H1 (cell line): ENCODE measurements at regions of chr10 and their contacts with region 1.

Region 1: GRCh38 chr10:110304780-110305421 is at the start of gene SMNDC1:
- DNase-seq: peak; percentile 97 to 99
- H3K4me3 ChIP-seq: peak within 1 kb of the TSS; percentile 66 to 90 (median 78)
- H3K27ac ChIP-seq: peak within 1 kb of the TSS; percentile 81
- H3K4me1 ChIP-seq: 0 out of 7 replicates have a peak, but pooled peaks cover 0 to 3% (median 0%) of the 10 kb centered on the region in 4 experiments
- H3K27me3 ChIP-seq: no peaks in the 10 kb centered on the region
- CTCF ChIP-seq: no peak
- EP300 ChIP-seq: 0 out of 3 replicates have a peak, but pooled peaks of 1 of the 2 experiments have one; percentile 6
- POLR2A ChIP-seq: peak; percentile 79 to 89
- RAD21 ChIP-seq: no peak
- total RNA-seq, gene SMNDC1: 48.6 and 53.5 TPM in 2 replicates

Region 2: GRCh38 chr10:110083884-110084283 is 221.0 kb before region 1 on chr10:
- CTCF ChIA-PET with region 1: no interaction called
- POLR2A ChIA-PET with region 1: no interaction called
- DNase-seq: no peak
- H3K4me3 ChIP-seq: no peak overlapping the region
- H3K27ac ChIP-seq: no peak overlapping the region
- H3K4me1 ChIP-seq: peaks cover 0 to 7% (median 5%) of the 10 kb centered on the region in 4 experiments; a peak in 4 of 7 replicates
- H3K27me3 ChIP-seq: no peaks in the 10 kb centered on the region; a peak in 1 of 7 replicates
- CTCF ChIP-seq: no peak
- EP300 ChIP-seq: no peak
- POLR2A ChIP-seq: no peak
- RAD21 ChIP-seq: no peak

Region 3: DNA sequence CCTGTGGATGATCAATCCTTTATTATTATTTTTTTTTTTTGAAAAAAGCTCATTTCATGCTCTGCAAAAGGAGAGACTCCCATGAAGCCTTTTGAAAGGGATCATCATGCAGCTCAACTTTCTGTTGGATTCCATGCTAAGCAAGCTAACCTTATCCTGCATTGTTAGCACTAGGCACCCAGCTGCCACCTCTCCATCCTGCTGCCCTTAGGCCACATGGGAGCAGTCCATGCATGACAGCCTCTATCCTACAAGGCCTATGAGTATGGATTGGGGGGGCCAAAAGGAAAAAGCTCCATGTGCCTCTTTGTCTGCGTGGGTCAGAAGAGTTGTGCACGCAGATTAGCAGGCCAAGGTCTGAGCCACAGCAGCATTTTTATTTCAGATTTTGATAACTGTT is 19.4 kb before region 1 on chr10:
- CTCF ChIA-PET with region 1: interaction called, 3 read pairs
- POLR2A ChIA-PET with region 1: interaction called, 12 read pairs
- DNase-seq: no peak
- H3K4me3 ChIP-seq: no peak overlapping the region
- H3K27ac ChIP-seq: no peak overlapping the region
- H3K4me1 ChIP-seq: peaks cover 0 to 3% (median 2%) of the 10 kb centered on the region in 4 experiments; a peak in 3 of 7 replicates
- H3K27me3 ChIP-seq: no peaks in the 10 kb centered on the region
- CTCF ChIP-seq: no peak
- EP300 ChIP-seq: no peak
- POLR2A ChIP-seq: no peak
- RAD21 ChIP-seq: no peak

Region 4: DNA sequence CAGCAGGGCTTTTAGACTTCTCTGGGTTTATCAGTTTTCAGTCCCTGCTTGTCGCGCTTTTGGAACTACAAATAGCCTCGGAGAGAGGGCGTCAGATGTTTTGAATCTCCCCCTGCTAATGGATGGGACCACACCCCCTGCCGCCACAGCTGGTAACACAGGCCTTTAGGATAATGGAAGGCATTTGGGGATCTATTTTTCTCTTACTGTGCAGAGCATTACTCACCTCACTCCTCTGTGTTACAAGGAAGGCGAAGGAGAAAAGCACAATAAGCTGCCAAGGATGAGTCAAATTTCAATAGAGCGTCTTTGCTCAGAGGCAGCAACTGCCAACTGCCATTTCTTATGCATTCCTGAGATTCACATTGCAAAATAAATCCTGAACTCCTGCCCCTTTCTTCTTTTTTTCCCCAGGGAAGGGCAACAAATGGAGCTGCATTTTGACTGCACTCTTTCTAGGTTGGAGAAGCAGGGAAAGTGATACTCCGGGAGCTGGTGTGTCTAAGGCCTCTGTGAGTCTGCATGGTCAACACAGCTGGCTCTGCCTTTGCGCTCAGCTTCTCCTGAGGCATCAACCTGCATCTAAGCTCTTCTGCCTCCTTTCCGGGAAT is 31.3 kb after region 1 on chr10:
- CTCF ChIA-PET with region 1: interaction called, 12 read pairs
- POLR2A ChIA-PET with region 1: no interaction called
- DNase-seq: peak in 1 of 2 experiments; percentile 58
- H3K4me3 ChIP-seq: peak overlapping the region in 1 of 4 experiments; percentile 8; a peak in 1 of 8 replicates
- H3K27ac ChIP-seq: no peak overlapping the region
- H3K4me1 ChIP-seq: peaks cover 5 to 12% (median 6%) of the 10 kb centered on the region in 4 experiments; a peak in 6 of 7 replicates
- H3K27me3 ChIP-seq: no peaks in the 10 kb centered on the region
- CTCF ChIP-seq: peak in 2 of 3 experiments; percentile 12 to 17; a peak in 2 of 4 replicates
- EP300 ChIP-seq: no peak
- POLR2A ChIP-seq: no peak
- RAD21 ChIP-seq: no peak

Region 5: GRCh38 chr10:110497438-110498086 is 192.7 kb after region 1 on chr10 and contains the start of gene DUSP5:
- CTCF ChIA-PET with region 1: interaction called, 11 read pairs
- POLR2A ChIA-PET with region 1: interaction called, 11 read pairs
- DNase-seq: peak; percentile 56 to 94
- H3K4me3 ChIP-seq: peak within 1 kb of the TSS; percentile 65 to 96 (median 80)
- H3K27ac ChIP-seq: peak within 1 kb of the TSS; percentile 62; the same call in 1 of the 2 replicates
- H3K4me1 ChIP-seq: peaks cover 12 to 33% (median 23%) of the 10 kb centered on the region in 4 experiments
- H3K27me3 ChIP-seq: peaks cover 0 to 34% (median 17%) of the 10 kb centered on the region in 4 experiments; a peak in 5 of 7 replicates
- CTCF ChIP-seq: no peak
- EP300 ChIP-seq: no peak
- POLR2A ChIP-seq: peak; percentile 84 to 94
- RAD21 ChIP-seq: no peak
- total RNA-seq, gene DUSP5: 27.0 and 30.3 TPM in 2 replicates

Region 6: GRCh38 chr10:110530131-110530831 is 225.4 kb after region 1 on chr10:
- CTCF ChIA-PET with region 1: interaction called, 11 read pairs
- POLR2A ChIA-PET with region 1: interaction called, 11 read pairs
- DNase-seq: peak; percentile 54 to 86
- H3K4me3 ChIP-seq: peak overlapping the region; percentile 27 to 65 (median 42); a peak in 7 of 8 replicates
- H3K27ac ChIP-seq: peak overlapping the region; percentile 57; the same call in 1 of the 2 replicates
- H3K4me1 ChIP-seq: peaks cover 4 to 17% (median 5%) of the 10 kb centered on the region in 4 experiments
- H3K27me3 ChIP-seq: no peaks in the 10 kb centered on the region; a peak in 1 of 7 replicates
- CTCF ChIP-seq: no peak
- EP300 ChIP-seq: no peak
- POLR2A ChIP-seq: peak in 1 of 2 experiments; percentile 30; a peak in 1 of 3 replicates
- RAD21 ChIP-seq: 0 out of 4 replicates have a peak, but pooled peaks of 1 of the 2 experiments have one; percentile 0

Region 7: DNA sequence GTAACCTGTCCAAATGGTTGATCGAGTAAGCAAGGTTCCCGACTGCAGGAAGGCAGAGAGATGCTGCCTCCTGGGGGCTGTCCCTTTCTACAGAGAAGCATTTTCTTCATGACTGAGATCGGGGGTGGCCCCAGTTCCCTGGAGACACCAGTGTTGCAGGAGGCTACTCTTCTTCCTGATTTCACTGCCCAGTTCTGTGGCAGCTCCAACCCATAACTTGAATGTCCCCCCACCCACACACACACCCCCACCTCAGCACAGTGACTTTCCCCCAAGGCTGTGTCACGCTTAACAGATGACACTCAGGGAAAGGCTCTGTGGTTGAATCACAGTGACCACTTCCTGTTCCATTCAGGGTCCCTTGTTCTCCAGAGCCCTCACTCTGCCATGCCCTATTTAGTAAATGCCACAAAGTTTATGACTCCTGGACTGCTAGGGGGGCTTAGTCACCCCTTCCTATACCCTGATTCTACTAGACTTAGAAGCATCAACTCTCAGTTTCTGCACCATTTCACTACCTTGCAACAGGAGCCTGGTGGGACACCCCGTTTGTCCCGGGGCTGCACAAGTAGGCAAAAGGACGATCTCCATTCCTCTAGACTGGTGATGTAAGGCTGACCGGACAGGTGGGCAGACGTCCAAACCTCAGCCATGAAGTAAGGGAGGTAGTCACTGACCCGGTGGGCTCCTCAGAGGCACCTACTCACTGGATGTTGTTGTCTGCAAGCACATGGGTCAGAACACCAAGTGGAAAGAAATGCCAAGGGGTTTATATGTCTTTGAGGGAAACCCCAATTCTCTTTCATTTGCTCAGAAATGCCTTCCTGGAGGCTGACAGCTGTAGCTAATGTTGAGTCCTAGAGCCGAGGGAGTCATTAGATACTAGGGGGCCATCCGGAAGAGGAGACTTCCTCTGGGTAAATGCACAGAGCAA is 231.3 kb after region 1 on chr10:
- CTCF ChIA-PET with region 1: interaction called, 11 read pairs
- POLR2A ChIA-PET with region 1: no interaction called
- DNase-seq: no peak
- H3K4me3 ChIP-seq: no peak overlapping the region
- H3K27ac ChIP-seq: no peak overlapping the region
- H3K4me1 ChIP-seq: peaks cover 0 to 3% (median 0%) of the 10 kb centered on the region in 4 experiments; a peak in 2 of 7 replicates
- H3K27me3 ChIP-seq: no peaks in the 10 kb centered on the region
- CTCF ChIP-seq: peak; percentile 36 to 55 (median 47)
- EP300 ChIP-seq: no peak
- POLR2A ChIP-seq: no peak
- RAD21 ChIP-seq: peak; percentile 80